SK-N-SH (cell line): ENCODE measurements at regions of chr14 and their contacts with region 1.

Region 1: GRCh38 chr14:104563742-104564615 is 15.6 kb upstream of the C14orf180 start:
- DNase-seq: peak; percentile 98
- H3K4me3 ChIP-seq: no peak overlapping the region; a peak in 1 of 4 replicates
- H3K27ac ChIP-seq: peak overlapping the region in 1 of 2 experiments; percentile 71; a peak in 2 of 4 replicates
- H3K4me1 ChIP-seq: peaks cover 0 to 65% of the 10 kb centered on the region in 2 experiments; a peak in 1 of 4 replicates
- H3K27me3 ChIP-seq: no peaks in the 10 kb centered on the region
- CTCF ChIP-seq: peak; percentile 78
- EP300 ChIP-seq: no peak
- RAD21 ChIP-seq: peak; percentile 94

Region 2: GRCh38 chr14:104137297-104138097 is 426.5 kb before region 1 on chr14:
- CTCF ChIA-PET with region 1: interaction called, 74 read pairs
- POLR2A ChIA-PET with region 1: interaction called, 3 read pairs
- DNase-seq: peak; percentile 92
- H3K4me3 ChIP-seq: peak overlapping the region; percentile 51 to 70
- H3K27ac ChIP-seq: peak overlapping the region in 1 of 2 experiments; percentile 90; a peak in 2 of 4 replicates
- H3K4me1 ChIP-seq: peaks cover 0 to 56% of the 10 kb centered on the region in 2 experiments; a peak in 1 of 4 replicates
- H3K27me3 ChIP-seq: peaks cover 17% of the 10 kb centered on the region
- CTCF ChIP-seq: peak; percentile 75
- EP300 ChIP-seq: peak in 1 of 2 experiments; percentile 44; a peak in 1 of 4 replicates
- RAD21 ChIP-seq: peak; percentile 86

Region 3: GRCh38 chr14:104224506-104225277 is 339.3 kb before region 1 on chr14:
- CTCF ChIA-PET with region 1: interaction called, 19 read pairs
- POLR2A ChIA-PET with region 1: interaction called, 3 read pairs
- DNase-seq: peak; percentile 67
- H3K4me3 ChIP-seq: peak overlapping the region in 1 of 2 experiments; percentile 24; a peak in 1 of 4 replicates
- H3K27ac ChIP-seq: peak overlapping the region in 1 of 2 experiments; percentile 100; a peak in 2 of 4 replicates
- H3K4me1 ChIP-seq: peaks cover 0 to 66% of the 10 kb centered on the region in 2 experiments; a peak in 2 of 4 replicates
- H3K27me3 ChIP-seq: no peaks in the 10 kb centered on the region
- CTCF ChIP-seq: peak; percentile 55
- EP300 ChIP-seq: no peak
- RAD21 ChIP-seq: no peak; the same call in 1 of the 2 replicates

Region 4: GRCh38 chr14:104424406-104425072 is 139.4 kb before region 1 on chr14:
- CTCF ChIA-PET with region 1: interaction called, 12 read pairs
- POLR2A ChIA-PET with region 1: no interaction called
- DNase-seq: peak; percentile 88
- H3K4me3 ChIP-seq: no peak overlapping the region
- H3K27ac ChIP-seq: peak overlapping the region in 1 of 2 experiments; percentile 39; a peak in 1 of 4 replicates
- H3K4me1 ChIP-seq: peaks cover 0 to 55% of the 10 kb centered on the region in 2 experiments; a peak in 1 of 4 replicates
- H3K27me3 ChIP-seq: no peaks in the 10 kb centered on the region
- CTCF ChIP-seq: no peak
- EP300 ChIP-seq: no peak
- RAD21 ChIP-seq: no peak; the same call in 1 of the 2 replicates

Region 5: GRCh38 chr14:104580961-104581360 is 17.0 kb after region 1 on chr14:
- CTCF ChIA-PET with region 1: interaction called, 96 read pairs
- POLR2A ChIA-PET with region 1: interaction called, 4 read pairs
- DNase-seq: peak; percentile 83
- H3K4me3 ChIP-seq: no peak overlapping the region
- H3K27ac ChIP-seq: peak overlapping the region in 1 of 2 experiments; percentile 81; a peak in 2 of 4 replicates
- H3K4me1 ChIP-seq: peaks cover 0 to 95% of the 10 kb centered on the region in 2 experiments; a peak in 1 of 4 replicates
- H3K27me3 ChIP-seq: no peaks in the 10 kb centered on the region
- CTCF ChIP-seq: no peak
- EP300 ChIP-seq: 0 out of 4 replicates have a peak, but pooled peaks of 1 of the 2 experiments have one; percentile 18
- RAD21 ChIP-seq: no peak

Region 6: GRCh38 chr14:104639889-104640548 is 76.0 kb after region 1 on chr14:
- CTCF ChIA-PET with region 1: interaction called, 55 read pairs
- POLR2A ChIA-PET with region 1: no interaction called
- DNase-seq: peak; percentile 97
- H3K4me3 ChIP-seq: no peak overlapping the region; a peak in 1 of 4 replicates
- H3K27ac ChIP-seq: no peak overlapping the region; a peak in 1 of 4 replicates
- H3K4me1 ChIP-seq: peaks cover 0 to 4% of the 10 kb centered on the region in 2 experiments; a peak in 2 of 4 replicates
- H3K27me3 ChIP-seq: no peaks in the 10 kb centered on the region
- CTCF ChIP-seq: peak; percentile 92
- EP300 ChIP-seq: no peak
- RAD21 ChIP-seq: peak; percentile 98